Activated CD4-positive, alpha-beta T cell treated with anti-CD3 and anti-CD28 coated beads, Interleukin-2, amount 10 ng/mL, durations not matched to agents 24 days and 14 days (primary cell): ENCODE measurements at regions of chr1 and their contacts with region 1.

Region 1: DNA sequence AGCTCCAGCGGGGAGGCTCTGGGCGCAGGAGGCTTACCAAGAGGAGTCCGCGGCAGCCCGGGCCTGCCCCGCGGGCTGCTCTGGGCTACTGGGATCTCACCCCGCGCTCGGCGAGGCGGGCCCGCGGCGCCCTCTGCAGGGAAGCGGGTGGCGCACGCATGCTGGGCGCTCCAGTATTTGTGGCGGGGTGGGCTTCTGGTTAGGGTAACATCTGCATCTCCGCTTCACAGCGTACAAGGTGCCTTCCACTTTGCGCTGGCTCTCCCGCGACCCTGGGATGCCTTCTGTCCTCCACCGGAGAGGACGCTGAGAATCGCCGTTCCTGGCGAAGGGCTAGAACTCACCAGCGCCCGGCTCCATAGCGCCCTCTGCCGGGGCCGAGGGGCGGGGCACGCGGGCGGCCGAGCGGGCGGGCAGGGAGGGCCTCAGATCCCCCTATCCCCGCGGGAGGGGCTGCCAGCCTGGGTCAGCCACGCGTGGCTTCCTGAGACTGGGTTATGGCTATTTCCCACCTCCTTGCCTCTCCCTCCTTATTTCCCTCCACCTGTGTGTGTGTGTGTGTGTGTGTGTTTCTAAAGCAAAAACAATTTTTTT is 46.6 kb upstream of the CTBS start:
- DNase-seq: peak; percentile 96
- H3K4me3 Mint-ChIP-seq: peak overlapping the region; percentile 91
- H3K27ac Mint-ChIP-seq: peak overlapping the region; percentile 92
- H3K4me1 Mint-ChIP-seq: peaks cover 18% of the 10 kb centered on the region
- H3K27me3 Mint-ChIP-seq: peaks cover 2% of the 10 kb centered on the region

Region 2: GRCh38 chr1:84298328-84298683 is 322.5 kb before region 1 on chr1:
- intact Hi-C with region 1: loop called (anchors 5 kb)
- DNase-seq: peak; percentile 88
- H3K4me3 Mint-ChIP-seq: peak overlapping the region; percentile 91
- H3K27ac Mint-ChIP-seq: peak overlapping the region; percentile 85
- H3K4me1 Mint-ChIP-seq: peaks cover 33% of the 10 kb centered on the region
- H3K27me3 Mint-ChIP-seq: peaks cover 13% of the 10 kb centered on the region

Region 3: DNA sequence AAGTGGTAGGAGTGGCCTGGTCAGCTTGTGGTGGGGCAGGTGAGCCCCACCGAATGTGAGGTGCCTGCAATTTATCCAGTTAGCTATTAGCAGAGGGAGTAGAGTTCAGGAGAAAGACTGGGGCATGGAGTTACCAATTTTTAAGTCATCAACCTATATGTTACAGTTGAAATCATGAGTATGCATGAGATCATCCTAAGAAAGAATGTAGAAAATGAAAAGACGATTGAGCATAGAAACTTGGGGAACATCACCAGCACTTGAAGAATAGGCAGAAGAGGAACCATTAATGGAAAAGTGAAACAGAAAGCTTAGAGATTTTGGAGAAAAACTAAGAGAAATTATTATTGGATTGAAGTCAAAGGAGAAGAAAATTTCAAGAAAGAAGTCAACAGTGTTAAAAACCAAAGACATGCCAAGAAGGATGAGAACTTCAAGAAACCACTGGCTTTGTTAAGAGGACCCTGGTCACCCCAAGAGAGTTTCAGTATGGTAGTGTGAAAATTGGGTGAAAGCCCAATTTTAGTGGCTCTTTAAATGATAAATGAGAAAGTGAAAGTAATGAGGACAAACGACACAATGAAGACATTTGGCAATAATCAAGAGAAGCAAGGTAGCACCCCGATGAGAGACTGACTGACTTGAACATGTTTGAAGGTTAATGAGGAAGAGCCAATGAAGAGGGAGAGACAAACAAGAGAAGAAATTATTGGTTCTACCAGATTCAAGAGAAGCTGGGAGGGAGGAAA is 185.8 kb before region 1 on chr1:
- intact Hi-C with region 1: no loop called
- DNase-seq: peak; percentile 69
- H3K4me3 Mint-ChIP-seq: no peak overlapping the region
- H3K27ac Mint-ChIP-seq: no peak overlapping the region
- H3K4me1 Mint-ChIP-seq: peaks cover 6% of the 10 kb centered on the region
- H3K27me3 Mint-ChIP-seq: peaks cover 2% of the 10 kb centered on the region

Region 4: GRCh38 chr1:84478876-84479868 is 141.6 kb before region 1 on chr1 and contains the start of gene RPF1:
- intact Hi-C with region 1: loop called (anchors 1 kb)
- DNase-seq: peak; percentile 93
- H3K4me3 Mint-ChIP-seq: peak within 1 kb of the TSS; percentile 96
- H3K27ac Mint-ChIP-seq: peak within 1 kb of the TSS; percentile 97
- H3K4me1 Mint-ChIP-seq: peaks cover 26% of the 10 kb centered on the region
- H3K27me3 Mint-ChIP-seq: peaks cover 20% of the 10 kb centered on the region
- total RNA-seq, gene RPF1: 63.3 and 64.4 TPM in 2 replicates

Region 5: GRCh38 chr1:84573967-84574842 is 46.6 kb before region 1 on chr1 and contains the start of gene CTBS:
- intact Hi-C with region 1: loop called (anchors 1 kb)
- DNase-seq: peak; percentile 95
- H3K4me3 Mint-ChIP-seq: peak within 1 kb of the TSS; percentile 99
- H3K27ac Mint-ChIP-seq: peak within 1 kb of the TSS; percentile 100
- H3K4me1 Mint-ChIP-seq: peaks cover 41% of the 10 kb centered on the region
- H3K27me3 Mint-ChIP-seq: no peaks in the 10 kb centered on the region
- total RNA-seq, gene CTBS: 13.1 and 13.9 TPM in 2 replicates

Region 6: GRCh38 chr1:84690397-84691121 is 69.7 kb after region 1 on chr1 and contains the start of gene SSX2IP:
- intact Hi-C with region 1: loop called (anchors 2 kb)
- DNase-seq: peak; percentile 100
- H3K4me3 Mint-ChIP-seq: peak within 1 kb of the TSS; percentile 98
- H3K27ac Mint-ChIP-seq: peak within 1 kb of the TSS; percentile 95
- H3K4me1 Mint-ChIP-seq: peaks cover 43% of the 10 kb centered on the region
- H3K27me3 Mint-ChIP-seq: peaks cover 4% of the 10 kb centered on the region
- total RNA-seq, gene SSX2IP: 10.0 and 11.8 TPM in 2 replicates

Region 7: DNA sequence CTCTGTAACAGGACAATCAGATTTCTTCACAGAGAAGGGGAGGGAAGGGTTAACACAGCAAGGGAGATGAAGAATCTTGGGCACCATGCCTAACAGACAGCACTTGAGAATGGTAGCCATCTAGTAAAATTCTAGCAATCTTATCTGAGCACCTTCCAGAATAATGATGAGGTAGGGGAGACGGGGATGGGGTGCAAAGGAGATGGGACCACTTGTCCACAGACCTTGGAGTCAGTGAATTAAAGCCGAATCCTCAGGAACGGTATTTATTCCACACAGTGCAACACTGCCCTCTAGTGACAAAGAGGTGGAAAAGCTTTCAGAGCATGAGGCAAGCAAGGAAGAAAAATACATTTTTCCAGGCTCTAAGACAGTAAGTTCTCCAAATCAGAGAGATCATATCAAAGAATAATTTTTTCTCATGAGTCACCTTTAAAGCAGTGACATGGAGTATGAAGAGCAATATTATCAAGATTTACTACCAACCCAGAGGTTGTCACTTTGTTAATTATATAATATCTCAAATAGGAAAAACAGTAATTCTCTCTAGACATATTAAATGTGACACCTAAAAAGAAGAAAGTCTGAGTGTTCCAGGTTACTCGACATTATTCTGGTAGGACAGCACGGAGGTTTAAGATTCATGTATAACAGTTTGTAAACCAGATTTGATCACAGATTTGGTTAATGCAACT is 315.4 kb after region 1 on chr1:
- intact Hi-C with region 1: loop called (anchors 10 kb)
- DNase-seq: peak; percentile 82
- H3K4me3 Mint-ChIP-seq: no peak overlapping the region
- H3K27ac Mint-ChIP-seq: no peak overlapping the region
- H3K4me1 Mint-ChIP-seq: peaks cover 4% of the 10 kb centered on the region
- H3K27me3 Mint-ChIP-seq: no peaks in the 10 kb centered on the region